Activated naive CD4-positive, alpha-beta T cell treated with anti-CD3 and anti-CD28 coated beads, Interleukin-2, amount 10 ng/mL, durations not matched to agents 7 days and 5 days (primary cell): ENCODE measurements at regions of chr7 and their contacts with region 1.

Region 1: DNA sequence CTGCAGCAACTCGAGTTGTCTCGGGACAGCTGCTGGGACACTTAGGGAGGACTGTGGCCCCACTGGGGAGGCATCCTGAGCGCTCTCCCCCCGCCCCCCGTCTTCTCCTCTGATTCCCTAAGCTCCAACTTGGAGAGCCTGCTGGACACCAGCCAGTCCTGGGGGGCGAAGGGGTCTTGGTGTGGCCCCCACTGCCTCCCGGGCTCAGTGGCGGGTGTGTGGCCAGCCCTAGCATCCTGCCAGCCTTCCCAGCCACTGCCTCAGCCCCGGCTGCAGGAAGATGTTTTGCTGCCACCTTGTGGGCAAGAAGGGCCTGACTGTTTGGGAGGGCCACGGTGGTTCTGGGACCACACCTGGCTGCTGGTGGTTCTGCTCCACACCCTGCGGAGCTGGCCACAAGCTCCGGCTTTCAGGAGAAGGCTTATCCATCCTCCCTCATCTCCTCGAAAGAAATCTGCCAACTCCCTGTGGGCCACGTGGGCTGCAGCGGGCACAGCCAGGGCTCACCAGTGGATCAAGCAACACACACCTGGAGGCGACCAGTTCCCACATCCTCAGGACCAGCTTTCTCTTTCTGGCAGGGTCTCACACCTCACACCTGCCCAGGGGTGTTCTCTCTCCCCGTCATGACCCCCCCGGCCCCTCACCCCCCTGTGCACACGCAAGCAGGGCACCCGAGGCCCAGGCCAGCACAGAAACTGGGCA is 24.8 kb downstream of the AGAP3 start:
- DNase-seq: peak; percentile 85
- H3K4me3 Mint-ChIP-seq: no peak overlapping the region
- H3K27ac Mint-ChIP-seq: peak overlapping the region; percentile 45
- H3K4me1 Mint-ChIP-seq: peaks cover 8% of the 10 kb centered on the region
- H3K27me3 Mint-ChIP-seq: peaks cover 51% of the 10 kb centered on the region

Region 2: DNA sequence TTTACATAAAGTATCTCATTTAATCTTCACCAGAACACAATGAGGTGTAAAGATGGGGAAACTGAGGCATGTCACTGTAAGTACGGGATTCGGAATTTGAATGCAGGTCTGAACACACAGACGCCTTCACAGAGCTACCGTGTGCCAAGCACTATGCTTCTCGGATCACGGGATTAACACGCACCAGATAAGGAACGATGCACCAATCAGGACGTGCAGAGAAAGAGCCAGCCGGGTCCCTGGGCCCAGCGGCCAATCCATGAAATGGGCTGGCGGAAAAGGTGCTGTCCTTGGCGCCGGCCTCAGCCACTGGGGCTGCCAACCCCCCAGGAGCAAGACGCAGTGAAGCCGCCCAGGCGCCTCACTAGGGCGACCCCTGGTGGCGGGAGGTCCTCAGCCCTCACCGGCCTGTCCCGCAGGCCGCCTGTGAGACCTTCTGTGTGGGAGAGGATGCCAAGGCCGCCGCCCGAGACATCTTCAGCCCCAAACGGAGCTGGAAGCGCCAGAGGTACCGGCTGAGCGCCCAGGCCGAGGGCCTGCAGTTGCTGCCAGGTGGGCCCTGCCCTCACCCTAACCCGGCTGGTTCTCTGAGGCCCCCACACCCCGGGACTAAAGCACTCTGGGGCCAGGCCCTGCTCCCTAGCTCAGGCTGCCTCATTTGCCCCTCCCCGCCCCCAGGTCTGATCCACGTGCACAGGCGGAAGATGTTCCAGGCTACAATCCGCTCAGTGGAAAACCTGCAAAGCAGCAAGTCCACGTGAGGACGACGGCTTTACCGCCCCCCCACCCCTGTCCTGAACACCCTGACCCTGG is 102.4 kb before region 1 on chr7:
- CTCF ChIA-PET with region 1: interaction called, 17 read pairs
- DNase-seq: peak; percentile 72
- H3K4me3 Mint-ChIP-seq: peak overlapping the region; percentile 65
- H3K27ac Mint-ChIP-seq: peak overlapping the region; percentile 90
- H3K4me1 Mint-ChIP-seq: peaks cover 71% of the 10 kb centered on the region
- H3K27me3 Mint-ChIP-seq: no peaks in the 10 kb centered on the region

Region 3: DNA sequence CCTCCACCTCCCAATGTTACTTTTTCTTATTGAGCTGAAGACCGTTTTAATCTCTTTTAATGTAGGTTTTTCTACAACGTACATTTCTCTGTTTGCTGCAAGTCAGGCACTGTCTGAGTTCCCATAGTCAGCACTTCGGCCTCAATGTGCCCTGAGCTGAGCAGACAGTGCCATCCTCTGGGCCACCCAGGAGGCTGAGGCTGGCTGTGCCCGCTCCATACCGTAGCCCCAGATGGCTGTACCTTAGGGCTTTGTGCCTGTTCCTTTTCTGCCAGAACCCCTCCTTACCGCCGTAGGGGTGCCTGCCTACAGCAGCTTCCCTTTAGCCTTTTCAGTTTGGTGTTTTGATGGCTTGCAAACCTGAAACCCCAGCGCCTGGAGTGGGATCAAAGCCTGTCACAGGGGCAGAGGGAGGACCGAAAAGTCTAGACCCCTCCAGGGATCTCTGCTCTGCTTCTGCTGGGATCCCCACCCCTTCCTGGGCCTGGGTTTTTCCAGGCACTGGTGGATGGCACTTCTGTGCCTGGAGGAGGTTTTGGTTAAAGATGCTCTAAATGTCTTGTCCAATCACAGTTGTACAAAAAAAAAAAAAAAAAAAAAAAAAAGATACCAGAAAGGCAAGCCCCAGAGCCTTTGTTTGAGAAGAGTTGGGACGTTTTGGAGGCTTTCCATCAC is 15.8 kb before region 1 on chr7:
- CTCF ChIA-PET with region 1: interaction called, 12 read pairs
- DNase-seq: no peak
- H3K4me3 Mint-ChIP-seq: no peak overlapping the region
- H3K27ac Mint-ChIP-seq: no peak overlapping the region
- H3K4me1 Mint-ChIP-seq: no peaks in the 10 kb centered on the region
- H3K27me3 Mint-ChIP-seq: peaks cover 9% of the 10 kb centered on the region